OCI-LY7 (cell line): ENCODE measurements at regions of chr4 and their contacts with region 1.

Region 1: GRCh38 chr4:71270901-71271300 is 67.9 kb upstream of the SLC4A4 start:
- DNase-seq: peak; percentile 14
- H3K4me3 ChIP-seq: no peak overlapping the region
- H3K27ac ChIP-seq: no peak overlapping the region
- H3K4me1 ChIP-seq: no peaks in the 10 kb centered on the region
- CTCF ChIP-seq: peak; percentile 71

Region 2: GRCh38 chr4:71713611-71714203 is 442.8 kb after region 1 on chr4:
- CTCF ChIA-PET with region 1: no interaction called
- POLR2A ChIA-PET with region 1: no interaction called
- intact Hi-C with region 1: loop called (anchors 5 kb)
- DNase-seq: peak; percentile 39
- H3K4me3 ChIP-seq: no peak overlapping the region
- H3K27ac ChIP-seq: no peak overlapping the region
- H3K4me1 ChIP-seq: no peaks in the 10 kb centered on the region
- CTCF ChIP-seq: peak; percentile 81